ENCODE measurements at regions of chr11 and their contacts with region 1.

Region 1: DNA sequence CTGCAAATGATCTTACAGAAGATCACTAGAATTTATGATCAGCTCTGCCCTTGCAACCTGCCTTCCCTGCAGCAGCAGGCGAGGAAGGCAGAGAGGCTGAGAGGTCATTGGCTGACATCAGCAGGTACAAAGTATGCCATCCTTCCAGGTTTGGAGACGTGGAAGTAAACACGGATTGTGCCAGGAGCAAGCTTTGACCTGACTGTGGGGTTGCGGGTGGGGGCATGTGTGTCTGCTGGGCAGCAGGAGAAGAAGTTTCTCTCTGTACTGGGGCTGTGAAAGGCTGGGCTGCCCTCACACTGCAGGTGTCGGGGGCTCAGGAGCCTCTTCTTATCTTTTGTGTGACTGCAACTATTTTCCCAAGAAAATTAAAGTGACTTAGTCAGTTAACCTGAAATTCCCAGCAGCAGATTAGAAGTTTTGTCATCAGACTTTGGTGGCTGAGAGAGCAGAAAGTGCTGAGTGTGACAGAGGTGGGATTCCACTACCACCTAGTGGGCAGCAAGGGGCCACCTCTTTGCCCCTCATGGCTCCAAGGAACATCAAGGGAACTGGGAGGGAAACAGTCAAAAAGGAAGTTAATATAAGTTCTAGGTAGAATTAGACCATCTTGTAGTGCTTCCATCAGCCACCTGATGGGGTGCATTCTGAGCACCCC is 565.9 kb downstream of the ETS1 start:
- DNase-seq: peak; percentile 28
- H3K4me3 Mint-ChIP-seq: no peak overlapping the region
- H3K27ac Mint-ChIP-seq: no peak overlapping the region
- H3K4me1 Mint-ChIP-seq: peaks cover 8% of the 10 kb centered on the region
- H3K27me3 Mint-ChIP-seq: no peaks in the 10 kb centered on the region
- CTCF ChIP-seq: peak; percentile 39

Region 2: GRCh38 chr11:127875131-127875530 is 146.3 kb before region 1 on chr11:
- CTCF ChIA-PET with region 1: no interaction called
- POLR2A ChIA-PET with region 1: no interaction called
- intact Hi-C with region 1: loop called (anchors 1 kb)
- DNase-seq: no peak
- H3K4me3 Mint-ChIP-seq: no peak overlapping the region
- H3K27ac Mint-ChIP-seq: no peak overlapping the region
- H3K4me1 Mint-ChIP-seq: no peaks in the 10 kb centered on the region
- H3K27me3 Mint-ChIP-seq: no peaks in the 10 kb centered on the region
- CTCF ChIP-seq: no peak

Region 3: DNA sequence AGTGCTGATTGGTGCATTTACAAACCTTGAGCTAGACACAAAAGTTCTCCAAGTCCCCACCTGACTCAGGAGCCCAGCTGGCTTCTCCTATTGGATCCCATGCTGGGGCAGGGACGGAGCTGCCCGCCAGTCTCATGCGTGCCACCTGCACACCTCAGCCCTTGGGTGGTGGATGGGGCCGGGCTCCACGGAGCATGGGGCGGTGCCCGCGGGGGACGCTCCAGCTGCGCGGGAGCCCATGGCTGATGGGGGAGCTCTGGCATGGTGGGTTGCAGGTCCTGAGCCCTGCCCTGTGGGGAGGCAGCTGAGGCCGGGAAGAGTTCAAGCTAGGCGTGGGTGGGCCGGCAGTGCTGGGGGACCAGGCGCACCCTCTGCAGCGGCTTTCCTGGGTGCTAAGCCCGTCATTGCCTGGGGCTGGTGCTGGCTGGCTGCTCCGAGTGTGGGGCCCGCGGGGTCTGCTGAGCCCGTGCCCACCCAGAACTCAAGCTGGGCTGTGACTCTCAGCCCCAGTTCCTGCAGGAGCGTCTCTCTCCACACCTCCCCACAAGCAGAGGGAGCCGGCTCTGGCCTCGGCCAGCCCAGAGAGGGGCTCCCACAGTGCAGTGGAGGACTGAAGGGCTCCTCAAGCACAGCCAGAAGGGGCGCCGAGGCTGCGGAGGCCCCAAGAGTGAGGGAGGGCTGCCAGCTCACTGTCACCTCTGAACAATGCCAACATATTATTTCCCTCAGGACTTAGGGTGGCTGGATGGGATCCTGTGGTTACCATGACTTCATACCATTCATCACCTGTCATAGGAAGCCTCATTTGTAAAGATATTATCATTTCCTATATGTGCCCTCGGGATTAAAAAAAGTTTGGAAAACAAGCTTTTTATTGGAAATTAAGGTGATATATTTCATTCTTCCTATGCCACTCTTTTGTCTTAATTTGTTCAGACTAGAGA is 122.8 kb before region 1 on chr11:
- CTCF ChIA-PET with region 1: no interaction called
- POLR2A ChIA-PET with region 1: no interaction called
- intact Hi-C with region 1: no loop called
- DNase-seq: no peak
- H3K4me3 Mint-ChIP-seq: no peak overlapping the region
- H3K27ac Mint-ChIP-seq: no peak overlapping the region
- H3K4me1 Mint-ChIP-seq: no peaks in the 10 kb centered on the region
- H3K27me3 Mint-ChIP-seq: no peaks in the 10 kb centered on the region
- CTCF ChIP-seq: no peak

Region 4: DNA sequence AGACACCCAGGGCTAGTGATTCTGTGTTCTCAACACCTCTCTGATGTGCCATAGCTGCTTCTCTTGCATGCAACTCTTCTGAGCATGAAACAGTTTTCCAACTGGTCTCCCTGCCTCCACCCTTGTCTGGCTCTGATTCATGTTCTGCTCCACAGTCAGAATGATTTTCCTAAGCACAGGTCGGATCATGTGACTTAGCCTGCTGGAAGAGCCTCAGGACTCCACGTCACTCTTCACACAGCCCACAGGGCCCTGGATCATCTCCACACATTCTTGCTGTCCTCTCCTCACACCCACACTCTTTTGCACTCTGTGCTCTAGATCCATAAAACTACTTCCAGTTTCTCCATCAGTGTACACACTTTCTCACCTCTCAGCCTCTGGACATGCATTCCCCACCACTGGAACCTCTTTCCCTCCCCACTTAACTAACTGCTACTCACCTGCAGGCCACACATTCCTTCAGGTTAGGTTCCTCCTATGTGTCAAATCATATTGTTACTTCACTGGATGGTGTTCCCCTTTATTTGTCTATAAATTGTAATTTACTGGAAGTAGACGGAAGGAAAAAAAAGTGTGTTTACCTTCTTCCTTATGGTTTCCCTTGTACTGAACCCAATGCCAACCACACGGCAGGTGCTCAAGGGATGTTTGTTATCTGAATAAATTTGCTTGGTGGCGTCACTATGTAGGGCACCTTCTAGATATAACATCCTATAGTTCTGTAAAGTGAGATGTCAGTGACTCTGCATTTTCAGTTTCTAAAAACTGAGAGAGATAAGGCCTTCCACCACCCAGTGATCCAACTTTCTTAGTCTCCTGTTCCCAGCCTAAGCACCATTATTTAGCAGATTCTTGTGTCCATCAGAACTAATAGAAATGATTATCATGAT is 432.2 kb after region 1 on chr11:
- CTCF ChIA-PET with region 1: no interaction called
- POLR2A ChIA-PET with region 1: no interaction called
- intact Hi-C with region 1: loop called (anchors 10 kb)
- DNase-seq: peak; percentile 76
- H3K4me3 Mint-ChIP-seq: no peak overlapping the region
- H3K27ac Mint-ChIP-seq: peak overlapping the region; percentile 14
- H3K4me1 Mint-ChIP-seq: peaks cover 21% of the 10 kb centered on the region
- H3K27me3 Mint-ChIP-seq: no peaks in the 10 kb centered on the region
- CTCF ChIP-seq: no peak

Region 5: DNA sequence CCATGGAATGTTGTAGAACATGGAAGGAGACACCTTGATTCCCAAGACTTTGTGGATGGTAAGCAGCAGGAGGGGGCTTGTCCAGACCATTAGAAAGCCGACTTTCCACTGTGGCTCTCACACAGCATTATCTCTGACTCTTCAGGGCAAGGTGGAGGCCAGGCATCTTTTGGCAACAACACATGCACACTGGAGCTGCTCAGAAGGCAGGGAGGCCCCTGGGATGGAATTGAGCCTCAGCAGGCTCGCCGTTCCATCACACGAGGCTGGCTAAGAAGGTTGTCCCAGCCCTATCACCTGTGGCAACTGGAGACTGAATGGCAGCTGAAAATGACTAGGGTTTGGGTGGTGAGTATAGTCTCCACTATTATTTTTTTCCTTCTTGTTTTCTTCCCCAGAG is 1717.9 kb after region 1 on chr11:
- CTCF ChIA-PET with region 1: no interaction called
- POLR2A ChIA-PET with region 1: no interaction called
- intact Hi-C with region 1: no loop called
- DNase-seq: no peak
- H3K4me3 Mint-ChIP-seq: no peak overlapping the region
- H3K27ac Mint-ChIP-seq: no peak overlapping the region
- H3K4me1 Mint-ChIP-seq: peaks cover 13% of the 10 kb centered on the region
- H3K27me3 Mint-ChIP-seq: peaks cover 1% of the 10 kb centered on the region
- CTCF ChIP-seq: no peak